ENCODE measurements at regions of chr15 and their contacts with region 1.

Region 1: DNA sequence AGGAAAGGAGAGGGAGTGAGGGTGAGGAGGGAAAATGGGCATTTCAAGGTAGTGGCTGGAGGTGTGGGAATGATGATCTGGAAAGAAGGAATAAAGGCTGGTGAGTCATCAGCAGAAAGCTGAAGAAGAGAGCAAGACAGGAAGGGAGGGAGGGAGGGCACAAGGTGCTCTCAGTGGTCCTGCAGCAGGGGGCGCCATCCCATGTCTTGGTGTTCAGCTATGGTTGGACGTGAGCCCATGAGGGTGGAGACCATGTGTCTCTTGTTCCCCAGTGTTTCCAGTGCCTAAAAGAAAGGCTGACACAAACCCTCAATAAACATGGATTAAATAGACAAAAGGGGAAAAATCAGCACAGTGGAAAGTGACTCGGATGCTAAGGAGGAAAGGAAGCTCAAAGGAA is 228.5 kb downstream of the NTRK3 start:
- DNase-seq: no peak
- H3K4me3 ChIP-seq: no peak overlapping the region
- H3K27ac ChIP-seq: no peak overlapping the region
- H3K4me1 ChIP-seq: no peaks in the 10 kb centered on the region
- H3K27me3 ChIP-seq: no peaks in the 10 kb centered on the region
- CTCF ChIP-seq: no peak
- POLR2A ChIP-seq: no peak

Region 2: GRCh38 chr15:87973501-87974215 is 54.4 kb before region 1 on chr15:
- intact Hi-C with region 1: loop called (anchors 10 kb)
- DNase-seq: no peak
- H3K4me3 ChIP-seq: no peak overlapping the region
- H3K27ac ChIP-seq: no peak overlapping the region
- H3K4me1 ChIP-seq: no peaks in the 10 kb centered on the region
- H3K27me3 ChIP-seq: no peaks in the 10 kb centered on the region
- CTCF ChIP-seq: no peak
- POLR2A ChIP-seq: no peak